ENCODE measurements at regions of chr2 and their contacts with region 1.

Region 1: GRCh38 chr2:25700221-25700660 is 26.9 kb upstream of the DTNB start:
- DNase-seq: peak; percentile 53
- H3K4me3 Mint-ChIP-seq: no peak overlapping the region
- H3K27ac Mint-ChIP-seq: no peak overlapping the region
- H3K4me1 Mint-ChIP-seq: no peaks in the 10 kb centered on the region
- H3K27me3 Mint-ChIP-seq: no peaks in the 10 kb centered on the region

Region 2: DNA sequence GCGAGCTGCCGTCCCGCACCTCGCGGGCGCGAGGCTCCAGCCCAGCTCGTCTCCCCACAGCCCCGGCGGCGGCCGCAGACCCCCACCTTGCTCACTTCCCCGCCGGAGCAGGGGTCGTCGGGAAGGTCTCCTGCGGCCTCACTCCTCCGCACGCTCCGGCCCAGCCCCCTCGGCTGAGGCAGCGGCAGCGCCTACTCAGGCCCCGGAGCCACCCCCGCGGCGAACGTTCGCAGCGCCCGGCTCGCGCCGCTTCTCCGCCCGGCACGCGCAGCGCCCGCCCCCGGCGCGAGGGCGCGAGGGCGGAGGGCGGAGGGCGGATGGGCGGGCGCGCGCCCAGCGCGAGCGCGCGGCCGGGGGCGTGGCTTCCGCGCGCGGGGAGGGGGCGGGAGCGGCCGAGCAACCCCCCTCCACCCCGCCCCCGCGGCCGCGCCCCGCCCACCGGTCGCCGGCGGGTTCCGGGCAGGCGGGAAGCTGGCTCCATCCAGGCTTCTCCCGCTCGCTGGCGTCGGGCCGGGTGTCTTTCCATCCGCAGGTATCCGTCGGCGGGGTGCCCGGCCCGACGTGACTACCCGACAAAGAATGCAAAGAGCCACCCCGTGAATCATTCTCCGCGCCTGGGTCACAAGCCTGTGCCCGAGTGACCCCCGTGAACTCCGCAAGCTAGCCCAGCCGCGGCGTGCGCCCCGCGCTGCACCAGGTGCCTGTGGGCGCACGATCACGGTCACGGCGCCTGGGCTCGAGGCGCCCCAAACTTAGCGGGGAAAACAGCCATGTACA is 26.8 kb before region 1 on chr2 and contains the start of gene DTNB:
- CTCF ChIA-PET with region 1: interaction called, 8 read pairs
- intact Hi-C with region 1: loop called (anchors 1 kb)
- DNase-seq: peak; percentile 82
- H3K4me3 Mint-ChIP-seq: peak within 1 kb of the TSS; percentile 79
- H3K27ac Mint-ChIP-seq: peak within 1 kb of the TSS; percentile 60
- H3K4me1 Mint-ChIP-seq: peaks cover 25% of the 10 kb centered on the region
- H3K27me3 Mint-ChIP-seq: no peaks in the 10 kb centered on the region
- total RNA-seq, gene DTNB: 27.2 to 27.6 TPM

Region 3: GRCh38 chr2:25711675-25712354 is 11.6 kb after region 1 on chr2:
- CTCF ChIA-PET with region 1: interaction called, 38 read pairs
- intact Hi-C with region 1: no loop called
- DNase-seq: no peak
- H3K4me3 Mint-ChIP-seq: peak overlapping the region; percentile 13
- H3K27ac Mint-ChIP-seq: no peak overlapping the region
- H3K4me1 Mint-ChIP-seq: peaks cover 7% of the 10 kb centered on the region
- H3K27me3 Mint-ChIP-seq: peaks cover 4% of the 10 kb centered on the region

Region 4: GRCh38 chr2:25787013-25787412 is 86.8 kb after region 1 on chr2:
- CTCF ChIA-PET with region 1: no interaction called
- intact Hi-C with region 1: no loop called
- DNase-seq: no peak
- H3K4me3 Mint-ChIP-seq: no peak overlapping the region
- H3K27ac Mint-ChIP-seq: no peak overlapping the region
- H3K4me1 Mint-ChIP-seq: peaks cover 28% of the 10 kb centered on the region
- H3K27me3 Mint-ChIP-seq: no peaks in the 10 kb centered on the region

Measured in activated naive CD4-positive, alpha-beta T cell treated with anti-CD3 and anti-CD28 coated beads for 36 hours (primary cell).